ENCODE measurements at regions of chr21 and their contacts with region 1.

Region 1: DNA sequence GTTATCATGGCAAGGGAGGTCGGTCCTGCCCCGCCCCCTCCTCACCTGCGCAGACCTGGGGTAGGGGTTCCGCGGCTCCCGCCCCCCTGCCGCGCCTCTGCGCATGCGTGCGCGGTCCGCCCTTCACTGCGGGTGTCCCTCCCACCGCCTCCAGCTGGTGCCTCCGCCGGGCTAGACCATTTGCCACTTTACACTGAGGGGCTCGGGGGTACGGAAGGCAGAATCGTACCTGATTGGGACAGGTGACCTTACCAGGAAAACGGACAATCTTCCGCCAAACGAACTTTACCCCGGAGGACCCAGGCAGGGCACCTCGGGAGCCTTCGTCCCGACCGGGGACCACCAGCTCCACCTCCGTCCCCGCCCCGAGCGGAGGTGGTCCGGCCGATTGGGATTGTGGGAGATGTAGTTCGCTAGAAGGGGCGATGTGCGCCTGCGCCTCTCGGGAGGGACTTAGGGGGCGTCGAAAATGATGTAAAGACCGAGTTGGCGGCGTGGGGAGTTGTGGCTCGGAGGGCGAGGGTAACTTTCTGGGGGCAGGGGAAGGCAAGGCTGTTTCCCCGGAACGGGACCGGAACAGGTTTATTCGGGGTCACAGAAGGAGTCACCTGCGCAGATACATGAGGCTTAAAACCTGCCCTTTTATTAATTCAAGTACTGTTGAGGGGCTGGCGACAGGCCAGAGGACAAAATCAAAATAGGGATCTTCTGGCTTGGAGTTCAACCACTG is at the start of gene DNAJC28:
- DNase-seq: peak; percentile 92 to 99 (median 94)

Region 2: DNA sequence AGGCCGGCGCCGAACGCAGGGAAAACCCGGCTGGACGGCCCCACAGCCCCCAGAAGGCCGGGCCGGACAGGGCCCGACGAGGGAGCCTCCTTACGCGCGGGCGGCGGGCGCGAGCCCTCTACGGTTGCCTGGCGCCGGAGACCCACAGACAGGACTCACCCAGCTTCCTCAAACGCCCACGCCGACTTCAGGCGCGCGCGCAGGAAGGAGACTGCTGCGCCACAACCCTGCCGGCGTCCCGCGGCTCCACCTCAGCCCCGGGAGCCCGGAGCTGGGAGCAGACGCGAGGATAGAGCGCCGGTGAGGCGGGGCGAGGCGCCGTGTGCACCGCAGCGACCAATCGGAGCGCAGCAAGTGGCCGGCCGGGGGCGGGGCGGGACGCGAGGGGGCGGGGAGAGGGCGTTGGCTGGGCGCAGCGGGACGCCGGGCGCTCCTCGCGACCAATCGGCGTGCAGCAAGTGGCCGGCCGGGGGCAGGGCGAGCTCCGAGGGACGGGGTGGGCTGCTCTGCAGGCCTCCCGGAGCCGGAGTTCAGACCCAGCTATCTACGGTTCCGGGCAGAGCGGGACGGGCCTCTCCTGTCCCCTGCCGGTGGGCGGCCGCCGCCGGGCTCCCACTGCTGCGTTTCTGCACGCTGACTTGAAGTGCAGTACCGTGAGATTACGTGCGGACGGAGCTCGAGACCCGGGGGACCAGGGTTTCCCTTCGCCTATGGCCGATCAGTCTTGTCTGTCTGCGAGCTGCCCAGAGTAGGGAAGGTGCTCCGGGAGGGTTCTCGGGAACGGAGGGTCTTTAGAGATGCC is 11.7 kb before region 1 on chr21 and contains the start of gene TMEM50B:
- intact Hi-C with region 1: loop called (anchors 1 kb)
- DNase-seq: peak; percentile 91 to 100 (median 96)